Activated CD8-positive, alpha-beta T cell treated with anti-CD3 and anti-CD28 coated beads, Interleukin-2, amount 10 ng/mL, durations not matched to agents 7 days and 5 days (primary cell): ENCODE measurements at regions of chr9 and their contacts with region 1.

Region 1: DNA sequence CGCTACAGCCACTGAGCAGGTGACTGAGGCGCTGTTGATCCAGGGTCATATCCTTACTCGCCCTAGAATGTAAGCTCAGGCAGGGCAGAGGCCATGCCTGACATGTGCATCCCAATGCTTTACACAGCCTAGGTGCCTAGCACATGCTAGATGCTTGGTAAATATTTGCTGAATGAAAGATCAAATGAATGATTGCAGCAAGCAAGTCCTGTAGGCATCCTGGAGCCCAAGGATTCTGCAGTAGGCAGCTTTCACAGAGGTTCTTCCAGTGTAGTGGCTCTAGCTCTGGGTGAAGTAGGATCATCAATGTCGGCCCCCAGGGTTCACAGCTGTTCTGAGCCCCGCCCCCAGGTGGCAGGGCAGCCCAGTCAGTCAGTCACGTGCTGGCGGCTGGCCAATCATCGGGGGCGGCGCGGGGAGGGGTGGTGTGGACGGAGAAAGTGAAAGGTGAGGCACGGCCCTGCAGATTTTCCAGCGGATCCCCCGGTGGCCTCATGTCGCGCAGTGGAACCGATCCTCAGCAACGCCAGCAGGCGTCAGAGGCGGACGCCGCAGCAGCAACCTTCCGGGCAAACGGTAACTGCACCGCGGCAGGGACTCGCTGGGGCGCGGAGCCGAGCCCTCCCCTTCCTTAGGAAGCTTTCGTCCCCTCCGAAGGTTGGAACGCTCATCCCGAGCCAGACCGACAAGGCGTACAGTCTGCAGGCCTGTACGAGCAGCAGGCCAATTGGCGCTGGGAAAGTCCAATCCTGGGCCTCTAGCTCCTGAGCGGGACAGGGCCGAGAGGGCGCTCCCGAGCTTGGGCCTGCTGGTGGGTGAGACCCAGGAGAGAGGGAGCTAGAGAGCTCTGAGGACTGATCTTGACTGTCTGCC is at the start of gene GALT:
- DNase-seq: peak; percentile 98
- ATAC-seq: peak; percentile 90
- H3K4me3 Mint-ChIP-seq: peak within 1 kb of the TSS; percentile 91
- H3K27ac Mint-ChIP-seq: peak within 1 kb of the TSS; percentile 88
- H3K4me1 Mint-ChIP-seq: peaks cover 36% of the 10 kb centered on the region
- H3K27me3 Mint-ChIP-seq: no peaks in the 10 kb centered on the region
- total RNA-seq, gene GALT: 79.1 to 83.9 TPM

Region 2: GRCh38 chr9:34620061-34620994 is 26.1 kb before region 1 on chr9 and contains the start of gene DCTN3:
- CTCF ChIA-PET with region 1: interaction called, 10 read pairs
- POLR2A ChIA-PET with region 1: interaction called, 27 read pairs
- DNase-seq: peak; percentile 96
- ATAC-seq: peak; percentile 98
- H3K4me3 Mint-ChIP-seq: peak within 1 kb of the TSS; percentile 90
- H3K27ac Mint-ChIP-seq: peak within 1 kb of the TSS; percentile 86
- H3K4me1 Mint-ChIP-seq: peaks cover 32% of the 10 kb centered on the region
- H3K27me3 Mint-ChIP-seq: peaks cover 30% of the 10 kb centered on the region
- total RNA-seq, gene DCTN3: 134 to 140 TPM

Region 3: DNA sequence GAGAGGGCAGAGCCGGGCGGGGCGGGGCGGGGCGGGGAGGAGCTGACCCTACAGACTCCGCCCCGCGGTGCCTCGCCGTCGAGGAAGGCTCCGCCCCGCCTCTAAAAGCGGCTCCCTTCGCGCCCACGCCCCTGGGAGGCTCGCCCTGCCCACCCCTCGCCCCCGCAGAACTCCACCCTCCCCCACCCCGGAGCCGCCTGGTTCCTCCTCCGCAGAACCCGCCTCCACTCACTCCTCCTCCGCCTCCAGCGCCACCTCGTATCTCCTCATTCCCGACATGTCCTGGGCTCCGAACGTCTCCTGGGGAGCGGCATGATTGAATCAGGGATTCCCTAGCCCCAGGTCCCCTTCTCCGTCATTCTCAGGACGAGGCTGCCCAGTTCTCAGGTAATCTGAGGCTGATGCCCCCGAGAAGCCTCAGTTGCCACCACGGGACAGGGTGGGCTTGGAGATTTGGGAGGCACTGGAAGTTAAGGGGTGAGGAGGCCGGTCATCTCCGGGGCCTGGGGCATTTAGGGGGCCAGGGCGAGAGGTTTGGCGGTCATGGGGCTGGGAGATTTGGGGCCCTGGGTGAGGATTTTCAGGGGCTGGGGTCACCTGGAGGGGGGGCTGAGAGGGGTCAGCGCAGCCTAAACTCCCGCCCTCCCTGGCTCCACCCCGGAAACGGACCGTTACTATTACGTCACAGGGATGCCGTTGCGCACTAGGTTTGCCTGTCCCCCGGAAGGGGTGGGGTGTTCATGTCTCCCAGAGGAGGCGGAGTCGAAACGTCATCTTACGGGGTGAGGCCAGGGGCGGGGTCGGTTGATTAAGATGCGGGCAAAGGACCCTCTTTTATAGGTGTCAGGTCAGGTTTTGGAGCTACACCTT is 19.2 kb after region 1 on chr9:
- CTCF ChIA-PET with region 1: interaction called, 86 read pairs
- POLR2A ChIA-PET with region 1: interaction called, 8 read pairs
- DNase-seq: peak; percentile 91
- ATAC-seq: peak; percentile 76
- H3K4me3 Mint-ChIP-seq: peak overlapping the region; percentile 84
- H3K27ac Mint-ChIP-seq: peak overlapping the region; percentile 93
- H3K4me1 Mint-ChIP-seq: peaks cover 43% of the 10 kb centered on the region
- H3K27me3 Mint-ChIP-seq: peaks cover 2% of the 10 kb centered on the region

Region 4: GRCh38 chr9:34686231-34686630 is 39.8 kb after region 1 on chr9:
- CTCF ChIA-PET with region 1: no interaction called
- POLR2A ChIA-PET with region 1: no interaction called
- DNase-seq: no peak
- ATAC-seq: no peak
- H3K4me3 Mint-ChIP-seq: no peak overlapping the region
- H3K27ac Mint-ChIP-seq: no peak overlapping the region
- H3K4me1 Mint-ChIP-seq: no peaks in the 10 kb centered on the region
- H3K27me3 Mint-ChIP-seq: no peaks in the 10 kb centered on the region